PC-9 (cell line): ENCODE measurements at regions of chr1 and their contacts with region 1.

Region 1: DNA sequence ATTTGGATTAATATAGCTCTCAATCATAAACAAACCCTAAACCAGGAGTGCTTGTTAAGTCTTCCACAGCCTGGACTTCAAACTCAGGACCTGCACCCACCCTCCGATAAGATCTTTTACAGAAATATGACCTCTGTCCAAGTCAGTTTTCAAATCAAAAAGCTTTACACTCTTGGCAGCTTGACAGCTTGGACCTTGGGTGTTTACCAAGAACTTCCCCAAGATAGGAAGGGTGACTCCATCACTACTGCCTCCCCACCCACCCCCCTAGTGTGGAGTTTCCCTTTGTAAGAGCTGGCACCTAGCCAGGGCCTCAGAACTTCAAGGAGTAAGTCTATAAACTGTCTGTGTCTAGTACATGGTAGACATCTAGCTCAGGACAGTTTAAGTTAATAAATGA is 9.6 kb downstream of the BCAR3 start:
- DNase-seq: peak; percentile 70 to 89
- H3K4me3 ChIP-seq: peak overlapping the region; percentile 22; the same call in 1 of the 2 replicates
- H3K27ac ChIP-seq: peak overlapping the region; percentile 62
- H3K4me1 ChIP-seq: peaks cover 100% of the 10 kb centered on the region
- H3K27me3 ChIP-seq: no peaks in the 10 kb centered on the region
- CTCF ChIP-seq: no peak

Region 2: DNA sequence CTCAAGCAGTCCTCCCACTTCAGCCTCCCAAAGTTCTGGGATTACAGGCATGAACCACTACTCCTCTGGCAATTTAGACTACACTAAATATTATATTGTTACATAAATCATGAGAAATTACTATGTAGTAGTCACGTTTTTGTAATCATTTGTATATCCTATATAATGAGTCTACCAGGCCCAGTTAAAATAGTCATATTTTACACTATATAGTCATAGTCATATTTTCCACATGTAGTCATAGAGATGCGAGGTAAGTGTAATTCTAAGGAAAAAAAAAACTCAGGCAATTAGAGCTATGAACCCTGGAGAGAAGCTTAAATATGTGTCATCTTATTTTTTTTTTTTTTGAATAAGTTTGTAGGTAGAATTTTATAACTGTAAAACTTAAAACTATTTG is 134.1 kb before region 1 on chr1:
- CTCF ChIA-PET with region 1: no interaction called
- POLR2A ChIA-PET with region 1: no interaction called
- intact Hi-C with region 1: no loop called
- DNase-seq: no peak
- H3K4me3 ChIP-seq: no peak overlapping the region
- H3K27ac ChIP-seq: no peak overlapping the region
- H3K4me1 ChIP-seq: no peaks in the 10 kb centered on the region
- H3K27me3 ChIP-seq: no peaks in the 10 kb centered on the region
- CTCF ChIP-seq: no peak

Region 3: GRCh38 chr1:93661829-93662474 is 10.1 kb before region 1 on chr1:
- CTCF ChIA-PET with region 1: interaction called, 3 read pairs
- POLR2A ChIA-PET with region 1: interaction called, 26 read pairs
- intact Hi-C with region 1: no loop called
- DNase-seq: peak; percentile 60 to 83
- H3K4me3 ChIP-seq: peak overlapping the region; percentile 1; the same call in 1 of the 2 replicates
- H3K27ac ChIP-seq: peak overlapping the region; percentile 86
- H3K4me1 ChIP-seq: peaks cover 74% of the 10 kb centered on the region
- H3K27me3 ChIP-seq: no peaks in the 10 kb centered on the region
- CTCF ChIP-seq: no peak

Region 4: GRCh38 chr1:93701619-93702018 is 29.6 kb after region 1 on chr1:
- CTCF ChIA-PET with region 1: interaction called, 4 read pairs
- POLR2A ChIA-PET with region 1: interaction called, 4 read pairs
- intact Hi-C with region 1: loop called (anchors 2 kb)
- DNase-seq: peak; percentile 97 to 100
- H3K4me3 ChIP-seq: no peak overlapping the region
- H3K27ac ChIP-seq: peak overlapping the region; percentile 97
- H3K4me1 ChIP-seq: peaks cover 68% of the 10 kb centered on the region
- H3K27me3 ChIP-seq: no peaks in the 10 kb centered on the region
- CTCF ChIP-seq: no peak

Region 5: DNA sequence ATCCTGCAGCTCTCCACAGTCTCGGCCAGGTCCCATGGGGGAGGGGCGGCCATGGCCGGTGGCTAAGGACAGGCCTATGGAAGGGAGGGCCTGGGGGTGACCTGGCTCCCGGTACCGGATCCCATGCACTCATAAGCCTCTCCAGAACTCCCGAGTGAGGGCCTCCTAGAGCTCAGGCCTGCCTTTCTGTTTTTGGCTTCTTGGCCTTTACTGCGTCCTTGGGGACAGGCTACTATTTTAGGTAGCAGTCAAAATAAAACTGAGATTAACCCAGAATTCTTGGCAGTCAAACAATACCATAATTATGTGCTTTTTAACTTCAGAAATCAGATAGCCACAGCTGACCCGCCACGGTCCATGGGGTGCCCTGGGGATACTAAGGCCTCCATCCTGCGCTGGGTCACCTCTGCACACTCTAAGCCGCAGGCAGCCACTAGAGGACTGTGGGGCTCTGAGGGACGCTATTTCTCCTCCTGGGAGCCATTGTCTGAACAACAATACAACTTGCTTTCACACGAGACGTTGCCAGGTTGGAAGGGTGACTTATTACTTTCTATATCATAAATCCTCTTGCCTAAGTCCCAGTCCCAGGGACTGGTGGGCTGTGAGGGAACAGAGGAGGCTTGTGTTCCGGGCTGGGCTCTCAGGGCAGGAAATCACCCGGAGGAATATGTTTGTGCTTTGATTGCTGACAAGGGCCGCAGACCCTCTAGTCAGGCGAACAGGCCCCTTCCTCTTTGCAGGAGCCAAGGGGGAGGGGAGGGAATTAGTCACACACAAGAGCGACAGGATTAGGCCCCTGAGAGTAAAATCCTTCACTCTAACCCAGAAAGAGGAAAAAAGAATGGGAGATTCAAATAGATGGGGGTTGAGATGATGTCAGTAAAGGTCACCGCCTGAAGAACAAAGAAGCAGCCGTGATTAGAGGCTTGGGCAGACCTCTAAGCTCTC is 50.3 kb after region 1 on chr1:
- CTCF ChIA-PET with region 1: no interaction called
- POLR2A ChIA-PET with region 1: interaction called, 12 read pairs
- intact Hi-C with region 1: no loop called
- DNase-seq: no peak
- H3K4me3 ChIP-seq: no peak overlapping the region
- H3K27ac ChIP-seq: peak overlapping the region; percentile 38; the same call in 1 of the 2 replicates
- H3K4me1 ChIP-seq: peaks cover 34% of the 10 kb centered on the region
- H3K27me3 ChIP-seq: no peaks in the 10 kb centered on the region
- CTCF ChIP-seq: no peak

Region 6: DNA sequence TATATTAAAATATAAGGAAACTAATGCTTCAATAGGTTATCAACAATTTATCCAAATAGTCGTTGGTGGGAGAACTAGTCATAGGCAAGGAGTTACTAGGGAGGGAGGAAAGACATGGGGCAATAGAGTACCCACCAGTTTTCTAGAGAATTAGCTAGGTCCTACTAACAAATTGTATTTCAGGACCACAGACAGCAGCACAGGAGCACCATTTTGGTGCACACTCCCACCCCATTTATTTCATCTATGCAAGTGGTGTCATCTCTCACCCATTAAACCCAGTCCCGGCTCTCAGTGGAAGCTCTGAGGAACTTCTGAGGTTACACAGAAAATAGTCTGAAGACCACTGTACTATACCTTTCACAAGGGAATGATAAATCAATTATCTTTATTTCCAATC is 98.6 kb after region 1 on chr1:
- CTCF ChIA-PET with region 1: no interaction called
- POLR2A ChIA-PET with region 1: no interaction called
- intact Hi-C with region 1: no loop called
- DNase-seq: no peak
- H3K4me3 ChIP-seq: peak overlapping the region; percentile 72
- H3K27ac ChIP-seq: peak overlapping the region; percentile 95; the same call in 1 of the 2 replicates
- H3K4me1 ChIP-seq: peaks cover 82% of the 10 kb centered on the region
- H3K27me3 ChIP-seq: no peaks in the 10 kb centered on the region
- CTCF ChIP-seq: no peak

Region 7: GRCh38 chr1:94025383-94026340 is 353.6 kb after region 1 on chr1:
- CTCF ChIA-PET with region 1: no interaction called
- POLR2A ChIA-PET with region 1: no interaction called
- intact Hi-C with region 1: no loop called
- DNase-seq: peak; percentile 54 to 77
- H3K4me3 ChIP-seq: no peak overlapping the region
- H3K27ac ChIP-seq: no peak overlapping the region
- H3K4me1 ChIP-seq: peaks cover 49% of the 10 kb centered on the region
- H3K27me3 ChIP-seq: no peaks in the 10 kb centered on the region
- CTCF ChIP-seq: peak; percentile 91